ENCODE measurements at regions of chr7 and their contacts with region 1.

Region 1: DNA sequence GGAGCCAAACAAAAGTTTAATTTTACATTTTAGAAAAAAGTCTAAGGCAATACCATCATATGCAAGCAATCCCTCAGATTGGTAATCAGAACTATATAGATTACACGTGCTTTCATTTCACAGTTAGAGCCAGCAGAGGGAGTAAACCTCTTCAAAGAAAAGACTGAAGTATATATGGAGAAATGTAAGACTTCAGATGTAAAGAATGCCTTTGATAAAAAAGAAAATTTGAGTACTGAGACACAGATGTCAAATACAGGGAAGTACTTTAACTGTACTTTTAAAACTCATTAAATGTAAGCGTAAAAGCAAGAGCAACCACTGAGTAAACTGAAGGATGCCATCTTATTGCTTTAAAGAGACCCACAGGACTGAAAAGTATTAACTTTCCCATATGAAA is 101.4 kb upstream of the FAM133B start:
- DNase-seq: no peak
- H3K4me3 Mint-ChIP-seq: no peak overlapping the region
- H3K27ac Mint-ChIP-seq: peak overlapping the region; percentile 83
- H3K4me1 Mint-ChIP-seq: peaks cover 60% of the 10 kb centered on the region
- H3K27me3 Mint-ChIP-seq: no peaks in the 10 kb centered on the region

Region 2: DNA sequence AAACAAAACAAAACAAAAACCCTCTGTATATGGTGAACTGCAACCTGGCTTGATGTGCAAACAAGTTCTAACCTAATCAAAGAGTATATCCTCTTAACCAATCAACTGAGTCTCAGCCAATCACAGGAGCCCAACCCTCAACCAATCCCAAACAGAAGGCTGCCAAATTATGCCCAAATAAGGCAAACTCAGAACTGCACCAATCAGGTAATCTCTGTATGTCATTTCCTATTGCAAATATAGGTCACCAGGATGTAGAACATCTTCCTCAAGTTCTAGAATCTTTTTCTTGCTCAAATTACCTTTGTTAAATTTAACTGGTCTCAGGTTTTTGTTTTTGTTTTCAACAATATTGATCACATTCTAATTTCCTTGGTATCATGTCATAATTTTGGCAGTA is 106.6 kb before region 1 on chr7:
- CTCF ChIA-PET with region 1: no interaction called
- POLR2A ChIA-PET with region 1: no interaction called
- intact Hi-C with region 1: no loop called
- DNase-seq: no peak
- H3K4me3 Mint-ChIP-seq: no peak overlapping the region
- H3K27ac Mint-ChIP-seq: peak overlapping the region; percentile 76
- H3K4me1 Mint-ChIP-seq: peaks cover 58% of the 10 kb centered on the region
- H3K27me3 Mint-ChIP-seq: no peaks in the 10 kb centered on the region

Region 3: GRCh38 chr7:92717993-92718716 is 26.6 kb after region 1 on chr7:
- CTCF ChIA-PET with region 1: no interaction called
- POLR2A ChIA-PET with region 1: no interaction called
- intact Hi-C with region 1: loop called (anchors 1 kb)
- DNase-seq: peak; percentile 82
- H3K4me3 Mint-ChIP-seq: peak overlapping the region; percentile 73
- H3K27ac Mint-ChIP-seq: peak overlapping the region; percentile 83
- H3K4me1 Mint-ChIP-seq: peaks cover 60% of the 10 kb centered on the region
- H3K27me3 Mint-ChIP-seq: no peaks in the 10 kb centered on the region